Spleen (tissue), 13 donors: ENCODE measurements at regions of chr13 and their contacts with region 1.

Region 1: DNA sequence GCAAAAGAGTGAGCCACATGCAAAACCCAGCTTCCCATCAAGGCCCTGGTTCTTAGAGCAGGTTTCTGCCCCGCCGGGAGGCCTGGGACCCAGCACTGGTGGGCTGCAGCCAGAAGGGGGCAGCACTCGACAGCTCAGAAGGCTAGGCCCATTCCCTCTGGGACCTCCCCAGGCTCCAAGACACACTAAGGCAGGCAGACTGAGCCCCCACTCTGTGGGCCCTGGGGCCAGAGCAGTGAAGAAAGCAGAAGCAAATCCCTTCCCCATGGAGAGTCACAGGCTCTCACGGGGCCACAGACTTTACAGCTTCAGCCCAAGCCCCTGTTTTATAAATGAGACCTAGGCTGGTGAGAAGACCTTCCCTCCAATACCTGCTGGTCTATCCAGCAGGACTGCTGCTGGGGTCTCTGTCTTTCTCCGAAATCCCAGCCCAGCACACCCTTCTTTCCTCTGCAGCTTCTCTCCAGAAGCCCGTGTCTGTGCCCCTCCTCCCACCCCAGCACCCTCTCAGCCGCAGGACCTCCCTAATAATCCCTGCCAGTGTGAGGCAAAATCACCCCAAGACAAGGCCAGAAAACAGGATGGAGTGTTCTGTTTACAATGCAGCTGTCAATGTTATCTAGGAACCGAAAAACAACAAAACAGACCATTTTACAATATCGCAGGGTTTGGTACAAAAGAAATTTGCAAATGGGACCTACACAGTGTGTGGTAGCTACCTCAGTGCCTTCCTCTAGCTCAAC is 109.3 kb downstream of the ABCC4 start:
- DNase-seq: peak; percentile 90
- H3K4me3 ChIP-seq: no peak overlapping the region
- H3K27ac ChIP-seq: no peak overlapping the region
- H3K4me1 ChIP-seq: peaks cover 0 to 4% (median 0%) of the 10 kb centered on the region in 6 donors
- H3K27me3 ChIP-seq: no peaks in the 10 kb centered on the region
- CTCF ChIP-seq: peak; percentile 49 to 91 (median 83)
- POLR2A ChIP-seq: no peak

Region 2: GRCh38 chr13:95296326-95296925 is 104.4 kb after region 1 on chr13:
- intact Hi-C with region 1: loop called (anchors 10 kb)
- DNase-seq: no peak
- H3K4me3 ChIP-seq: no peak overlapping the region
- H3K27ac ChIP-seq: no peak overlapping the region
- H3K4me1 ChIP-seq: peaks cover 0 to 42% (median 14%) of the 10 kb centered on the region in 6 donors
- H3K27me3 ChIP-seq: peaks cover 0 to 6% (median 0%) of the 10 kb centered on the region in 7 donors
- CTCF ChIP-seq: peak; percentile 20 to 74 (median 60)
- POLR2A ChIP-seq: no peak

Region 3: DNA sequence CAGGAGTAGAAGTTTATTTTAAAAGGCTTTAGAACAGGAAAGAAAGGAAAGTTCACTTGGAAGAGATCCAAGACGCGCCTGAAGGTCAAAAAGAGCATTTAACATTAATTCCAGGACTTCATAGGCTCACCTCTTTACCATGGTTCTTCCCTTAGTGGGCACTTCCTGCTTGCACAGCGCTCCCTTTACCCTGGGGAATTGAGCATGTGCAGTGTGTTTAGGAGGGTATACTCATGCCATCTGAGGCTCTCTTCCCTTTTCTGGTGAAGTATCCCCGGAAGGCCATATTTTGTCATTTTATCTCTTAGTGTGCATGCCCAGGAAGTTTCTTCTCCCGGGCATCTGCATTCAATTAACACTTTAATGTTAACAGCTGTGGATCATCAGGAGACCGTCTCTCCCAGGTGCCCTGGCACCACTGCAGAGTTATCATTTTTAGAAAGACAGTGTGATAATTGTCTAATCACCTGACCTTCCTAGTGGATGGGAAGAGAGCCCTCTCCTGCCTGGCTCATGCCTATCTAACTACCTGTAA is 175.4 kb after region 1 on chr13:
- intact Hi-C with region 1: no loop called
- DNase-seq: no peak
- H3K4me3 ChIP-seq: no peak overlapping the region
- H3K27ac ChIP-seq: no peak overlapping the region
- H3K4me1 ChIP-seq: peaks cover 0 to 9% (median 5%) of the 10 kb centered on the region in 6 donors
- H3K27me3 ChIP-seq: peaks cover 0 to 8% (median 0%) of the 10 kb centered on the region in 7 donors
- CTCF ChIP-seq: no peak
- POLR2A ChIP-seq: no peak

Region 4: GRCh38 chr13:95382411-95382810 is 190.4 kb after region 1 on chr13:
- intact Hi-C with region 1: loop called (anchors 5 kb)
- DNase-seq: no peak
- H3K4me3 ChIP-seq: no peak overlapping the region
- H3K27ac ChIP-seq: no peak overlapping the region
- H3K4me1 ChIP-seq: peaks cover 0 to 21% (median 11%) of the 10 kb centered on the region in 6 donors
- H3K27me3 ChIP-seq: peaks cover 0 to 57% (median 0%) of the 10 kb centered on the region in 7 donors
- CTCF ChIP-seq: no peak
- POLR2A ChIP-seq: no peak

Region 5: GRCh38 chr13:95403828-95404522 is 212.0 kb after region 1 on chr13:
- intact Hi-C with region 1: loop called (anchors 2 kb)
- DNase-seq: peak; percentile 93
- H3K4me3 ChIP-seq: peak overlapping the region in 5 of 8 donors; percentile 16 to 60 (median 30)
- H3K27ac ChIP-seq: no peak overlapping the region
- H3K4me1 ChIP-seq: peaks cover 7 to 14% (median 10%) of the 10 kb centered on the region in 6 donors
- H3K27me3 ChIP-seq: peaks cover 0 to 26% (median 0%) of the 10 kb centered on the region in 7 donors
- CTCF ChIP-seq: peak; percentile 61 to 94 (median 89)
- POLR2A ChIP-seq: no peak

Region 6: GRCh38 chr13:95579303-95579702 is 387.3 kb after region 1 on chr13:
- intact Hi-C with region 1: no loop called
- DNase-seq: no peak
- H3K4me3 ChIP-seq: no peak overlapping the region
- H3K27ac ChIP-seq: no peak overlapping the region
- H3K4me1 ChIP-seq: no peaks in the 10 kb centered on the region
- H3K27me3 ChIP-seq: no peaks in the 10 kb centered on the region
- CTCF ChIP-seq: no peak
- POLR2A ChIP-seq: no peak